Mucosa of descending colon (tissue), 3 donors: ENCODE measurements at regions of chr2 and their contacts with region 1.

Region 1: DNA sequence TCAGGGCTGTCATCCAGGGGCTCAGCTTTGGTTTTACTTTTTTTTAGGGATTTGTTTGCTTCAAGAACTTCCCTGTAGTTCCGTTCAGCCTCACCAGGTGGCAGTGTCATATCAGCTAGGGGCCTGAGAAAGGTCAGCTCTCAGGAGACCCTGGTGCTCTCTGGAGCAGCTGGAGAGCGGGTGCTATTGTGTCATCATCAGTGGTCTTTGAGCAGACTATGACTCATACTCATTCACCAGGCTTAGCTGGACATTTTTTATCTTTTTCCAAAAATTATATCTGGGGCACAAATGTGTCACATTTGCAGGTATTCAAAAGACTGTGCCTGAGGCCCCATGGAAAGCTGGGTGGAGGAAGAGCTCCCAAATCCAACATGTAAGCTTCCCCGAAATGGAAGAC is 24.4 kb downstream of the ZNF892 start:
- DNase-seq: peak in 2 of 3 donors; percentile 69 to 87
- ATAC-seq: peak; percentile 54
- H3K4me3 ChIP-seq: no peak overlapping the region
- H3K4me1 ChIP-seq: no peaks in the 10 kb centered on the region
- CTCF ChIP-seq: peak; percentile 51

Region 2: GRCh38 chr2:95314964-95315611 is 83.4 kb after region 1 on chr2:
- intact Hi-C with region 1: loop called in 1 of 2 experiments (anchors 10 kb)
- DNase-seq: peak; percentile 33 to 74 (median 73)
- ATAC-seq: peak; percentile 73
- H3K4me3 ChIP-seq: no peak overlapping the region
- H3K4me1 ChIP-seq: no peaks in the 10 kb centered on the region
- CTCF ChIP-seq: peak; percentile 65